Dorsolateral prefrontal cortex (tissue), 120 donors: ENCODE measurements at regions of chr1 and their contacts with region 1.

Region 1: GRCh38 chr1:64242895-64243756 is 39.7 kb downstream of the UBE2U start:
- DNase-seq: no peak
- H3K4me3 ChIP-seq: no peak overlapping the region
- H3K27ac ChIP-seq: no peak overlapping the region
- H3K27me3 ChIP-seq: peaks cover 0 to 3% (median 0%) of the 10 kb centered on the region in 45 donors
- CTCF ChIP-seq: peak; percentile 32 to 86 (median 65)

Region 2: DNA sequence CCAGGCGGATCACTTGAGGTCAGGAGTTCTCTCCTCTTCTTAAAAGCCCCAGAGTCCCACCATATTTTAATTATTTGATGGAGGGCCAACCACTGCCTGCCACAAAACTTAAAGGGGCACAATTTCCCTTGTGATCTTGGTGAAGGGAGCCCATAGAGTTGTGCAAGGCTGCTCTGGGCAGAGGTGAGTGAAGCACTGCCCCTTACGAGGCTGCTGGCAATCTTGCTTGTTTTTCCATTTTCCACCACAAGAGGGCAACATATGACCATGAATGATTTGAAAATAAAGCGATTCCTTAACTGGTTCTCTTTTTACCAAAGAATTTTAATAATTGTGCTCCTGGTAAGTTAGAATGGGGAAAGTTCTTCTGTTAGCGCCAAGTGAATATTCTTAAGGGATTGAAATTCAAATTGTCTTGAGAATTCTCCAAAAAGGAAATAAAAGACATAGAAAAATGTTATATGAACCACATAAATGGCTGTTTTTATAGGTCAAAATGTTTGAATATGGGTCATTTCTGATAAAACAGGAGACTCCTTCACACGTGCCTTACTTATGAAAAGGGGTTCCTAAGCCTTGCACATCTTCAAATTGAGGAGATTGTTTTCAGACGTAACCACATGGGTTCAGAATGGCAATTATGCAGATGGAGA is 627.2 kb before region 1 on chr1:
- intact Hi-C with region 1: loop called (anchors 1 to 5 kb)
- DNase-seq: peak in 5 of 10 donors; percentile 22 to 63 (median 37)
- H3K4me3 ChIP-seq: no peak overlapping the region
- H3K27ac ChIP-seq: no peak overlapping the region
- H3K27me3 ChIP-seq: no peaks in the 10 kb centered on the region
- CTCF ChIP-seq: peak; percentile 70 to 96 (median 90)

Region 3: DNA sequence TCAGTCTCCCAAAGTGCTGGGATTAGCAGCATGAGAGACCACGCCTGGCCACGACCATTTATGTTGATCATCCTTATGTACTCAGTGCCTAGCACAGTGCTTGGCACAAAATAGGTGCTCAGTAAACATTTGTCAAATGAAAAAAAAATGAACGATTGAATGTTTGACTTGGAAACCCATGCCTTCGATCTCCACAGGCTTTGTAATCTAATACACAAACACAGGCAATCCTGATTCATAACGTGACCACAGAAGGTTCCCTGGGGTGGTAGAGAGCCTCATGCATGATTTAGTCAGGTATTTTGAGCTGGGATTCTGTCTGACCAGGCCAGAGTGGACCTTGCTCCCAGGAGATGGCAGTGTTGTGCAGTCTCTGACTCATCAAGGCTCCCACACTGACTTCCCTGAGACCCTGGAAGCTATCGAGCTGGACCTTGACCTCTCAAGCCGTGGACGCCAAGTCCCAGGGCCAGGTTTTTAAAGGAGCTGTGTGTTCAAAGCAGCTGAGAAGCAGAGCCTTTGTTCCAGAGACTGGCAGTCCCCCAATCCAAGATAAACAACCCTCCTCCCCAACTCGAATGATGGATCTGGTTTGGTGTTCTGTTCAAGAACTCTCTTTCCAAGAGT is 568.8 kb before region 1 on chr1:
- intact Hi-C with region 1: loop called (anchors 1 to 5 kb)
- DNase-seq: peak in 9 of 10 donors; percentile 36 to 64 (median 57)
- H3K4me3 ChIP-seq: no peak overlapping the region
- H3K27ac ChIP-seq: peak overlapping the region in 7 of 59 donors; percentile 8 to 57 (median 27)
- H3K27me3 ChIP-seq: no peaks in the 10 kb centered on the region
- CTCF ChIP-seq: peak in 55 of 56 donors; percentile 23 to 81 (median 63)

Region 4: GRCh38 chr1:63691701-63692425 is 551.3 kb before region 1 on chr1:
- intact Hi-C with region 1: loop called in 1 of 2 experiments (anchors 5 kb)
- DNase-seq: peak in 4 of 10 donors; percentile 12 to 66 (median 47)
- H3K4me3 ChIP-seq: no peak overlapping the region
- H3K27ac ChIP-seq: peak overlapping the region in 48 of 59 donors; percentile 5 to 79 (median 48)
- H3K27me3 ChIP-seq: no peaks in the 10 kb centered on the region
- CTCF ChIP-seq: peak; percentile 43 to 88 (median 79)

Region 5: DNA sequence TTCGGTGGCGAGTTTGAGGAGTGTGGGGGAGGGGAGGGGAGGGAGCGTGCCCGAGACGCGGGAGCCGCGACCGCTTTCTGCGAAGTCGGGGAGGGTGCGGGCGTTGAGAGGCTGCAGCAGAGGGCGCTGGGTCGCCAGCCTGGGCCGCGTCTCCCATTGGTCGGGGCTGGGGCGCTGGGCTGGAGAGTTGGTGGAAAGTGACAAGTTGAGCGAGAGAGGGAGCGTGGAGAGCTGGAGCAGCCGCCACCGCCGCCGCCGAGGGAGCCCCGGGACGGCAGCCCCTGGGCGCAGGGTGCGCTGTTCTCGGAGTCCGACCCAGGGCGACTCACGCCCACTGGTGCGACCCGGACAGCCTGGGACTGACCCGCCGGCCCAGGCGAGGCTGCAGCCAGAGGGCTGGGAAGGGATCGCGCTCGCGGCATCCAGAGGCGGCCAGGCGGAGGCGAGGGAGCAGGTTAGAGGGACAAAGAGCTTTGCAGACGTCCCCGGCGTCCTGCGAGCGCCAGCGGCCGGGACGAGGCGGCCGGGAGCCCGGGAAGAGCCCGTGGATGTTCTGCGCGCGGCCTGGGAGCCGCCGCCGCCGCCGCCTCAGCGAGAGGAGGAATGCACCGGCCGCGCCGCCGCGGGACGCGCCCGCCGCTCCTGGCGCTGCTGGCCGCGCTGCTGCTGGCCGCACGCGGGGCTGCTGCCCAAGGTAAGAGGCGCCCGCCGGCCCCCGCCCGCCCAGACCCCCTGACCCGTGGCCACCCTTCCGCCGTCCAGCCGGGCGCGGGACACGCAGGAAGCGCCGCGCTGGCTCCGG is 469.1 kb before region 1 on chr1 and contains the start of gene ROR1:
- intact Hi-C with region 1: loop called (anchors 2 to 5 kb)
- DNase-seq: peak; percentile 75 to 94 (median 81)
- H3K4me3 ChIP-seq: peak within 1 kb of the TSS; percentile 55 to 87 (median 72)
- H3K27ac ChIP-seq: peak within 1 kb of the TSS in 46 of 59 donors; percentile 31 to 89 (median 74)
- H3K27me3 ChIP-seq: peaks cover 0 to 12% (median 0%) of the 10 kb centered on the region in 45 donors
- CTCF ChIP-seq: peak in 55 of 56 donors; percentile 30 to 87 (median 69)
- total RNA-seq, gene ROR1: 0.53 to 5.6 (median 3.1) TPM

Region 6: DNA sequence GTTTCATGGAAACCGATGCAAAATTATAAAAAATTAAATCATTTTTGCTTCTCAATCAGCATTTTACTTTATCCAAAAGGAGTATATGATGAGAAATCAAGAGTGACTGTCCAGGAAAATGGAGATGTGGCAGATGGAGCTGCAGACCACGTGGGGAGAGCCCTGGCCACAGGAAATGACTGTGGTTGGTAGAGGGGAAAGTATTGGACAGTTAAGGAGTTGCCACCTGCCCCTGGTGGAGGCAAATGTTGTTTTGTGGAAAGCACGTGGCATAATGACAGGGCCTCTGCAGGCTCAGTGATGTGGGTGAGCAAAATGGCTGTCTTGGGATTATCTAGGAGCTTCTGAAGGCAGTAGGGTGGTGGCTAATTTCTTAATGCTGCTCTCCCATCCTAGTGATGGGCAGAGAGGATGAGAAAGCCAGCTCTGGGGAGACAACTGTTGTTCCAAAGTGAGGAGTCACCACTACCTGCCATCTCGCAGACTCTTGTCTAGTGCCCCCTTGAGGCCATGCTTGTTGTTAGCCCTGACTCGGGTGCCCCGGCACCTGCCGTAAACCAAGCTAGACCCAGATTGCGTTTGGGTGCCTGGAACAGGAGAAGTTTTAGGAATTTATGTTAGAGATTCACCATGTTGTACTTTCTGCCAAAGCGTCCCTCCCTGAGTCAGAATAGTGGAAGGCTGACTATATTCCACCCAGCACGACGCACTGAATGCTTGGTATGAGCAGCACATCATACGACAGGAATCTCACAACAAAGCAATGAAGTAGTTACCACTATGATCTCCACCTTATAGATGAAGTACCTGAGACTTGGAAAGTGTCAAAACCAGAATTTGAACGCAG is 325.3 kb before region 1 on chr1:
- intact Hi-C with region 1: loop called in 1 of 2 experiments (anchors 10 kb)
- DNase-seq: peak in 1 of 10 donors; percentile 51
- H3K4me3 ChIP-seq: no peak overlapping the region
- H3K27ac ChIP-seq: peak overlapping the region in 1 of 59 donors; percentile 68
- H3K27me3 ChIP-seq: no peaks in the 10 kb centered on the region
- CTCF ChIP-seq: peak in 2 of 56 donors; percentile 12 to 13

Region 7: DNA sequence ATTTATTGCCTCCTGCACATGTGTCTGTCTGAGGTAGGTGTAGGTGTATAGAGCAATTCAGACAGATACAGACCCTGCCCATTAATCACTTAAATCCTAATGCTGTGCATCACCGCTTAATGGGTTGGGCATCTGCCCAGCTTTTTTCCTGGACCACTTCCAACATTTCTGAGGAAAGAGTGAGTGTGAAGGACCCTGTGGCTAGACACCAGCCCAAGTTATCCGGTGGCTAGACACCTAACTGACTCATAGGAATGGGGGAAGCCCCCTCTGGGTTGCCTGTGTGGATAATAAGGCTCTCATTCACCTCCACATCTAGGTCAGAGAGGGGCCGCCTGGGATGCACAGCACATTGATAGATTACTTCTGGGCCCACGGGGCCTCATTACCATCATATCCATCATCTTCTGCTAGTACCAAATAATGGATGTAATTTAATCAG is 380.6 kb after region 1 on chr1:
- intact Hi-C with region 1: no loop called
- DNase-seq: no peak
- H3K4me3 ChIP-seq: no peak overlapping the region
- H3K27ac ChIP-seq: no peak overlapping the region
- H3K27me3 ChIP-seq: no peaks in the 10 kb centered on the region
- CTCF ChIP-seq: no peak